Lower leg skin (tissue), 4 donors: ENCODE measurements at regions of chr6 and their contacts with region 1.

Region 1: GRCh38 chr6:134097114-134097707 is 44.8 kb upstream of the SLC2A12 start:
- DNase-seq: peak in 1 of 2 donors; percentile 47
- H3K4me3 ChIP-seq: no peak overlapping the region
- CTCF ChIP-seq: peak in 1 of 3 donors; percentile 53
- POLR2A ChIP-seq: no peak

Region 2: DNA sequence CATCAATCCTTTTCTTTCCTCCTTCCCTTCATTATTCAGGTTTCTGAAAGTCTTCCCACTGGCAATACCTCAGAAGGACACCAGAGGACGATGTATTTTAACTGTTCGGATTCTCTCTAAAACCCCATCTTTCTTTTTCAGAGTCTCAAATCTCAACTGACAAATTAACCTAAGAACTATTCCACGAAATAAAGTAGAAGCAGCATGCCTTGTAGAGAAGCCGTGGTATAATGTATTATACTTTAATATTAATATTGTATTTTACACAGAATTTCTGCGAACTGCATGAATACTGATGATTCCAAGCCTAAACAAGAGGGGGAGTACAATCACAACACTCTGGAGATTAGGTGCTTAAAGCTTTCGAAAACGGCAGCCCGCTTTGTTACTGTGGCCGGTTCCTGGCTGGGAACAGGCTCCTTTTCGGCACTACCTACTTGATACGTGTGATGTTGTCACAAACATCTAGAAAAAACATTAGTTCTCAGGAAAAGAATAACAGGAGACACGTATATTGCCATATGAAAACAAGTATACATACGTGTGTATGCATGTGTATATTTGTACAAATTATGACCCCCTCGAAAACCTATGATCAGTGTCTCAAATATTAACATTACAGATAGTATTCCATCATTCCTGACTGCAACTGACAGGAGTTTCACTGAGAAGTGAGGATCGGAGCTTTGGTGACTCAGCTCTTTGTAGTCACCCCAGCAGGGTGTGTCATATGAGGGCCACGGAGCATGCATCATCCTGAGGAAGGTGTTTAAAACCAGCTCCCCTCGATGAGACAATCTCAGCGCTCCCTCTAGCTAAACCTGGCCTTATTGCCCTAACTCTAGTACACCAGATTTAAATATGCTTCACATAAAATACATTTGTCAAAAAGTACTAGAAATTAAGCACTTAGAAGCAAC is 528.0 kb before region 1 on chr6:
- intact Hi-C with region 1: loop called (anchors 10 kb)
- DNase-seq: peak; percentile 25 to 72
- H3K4me3 ChIP-seq: no peak overlapping the region
- CTCF ChIP-seq: peak in 1 of 3 donors; percentile 87
- POLR2A ChIP-seq: no peak

Region 3: DNA sequence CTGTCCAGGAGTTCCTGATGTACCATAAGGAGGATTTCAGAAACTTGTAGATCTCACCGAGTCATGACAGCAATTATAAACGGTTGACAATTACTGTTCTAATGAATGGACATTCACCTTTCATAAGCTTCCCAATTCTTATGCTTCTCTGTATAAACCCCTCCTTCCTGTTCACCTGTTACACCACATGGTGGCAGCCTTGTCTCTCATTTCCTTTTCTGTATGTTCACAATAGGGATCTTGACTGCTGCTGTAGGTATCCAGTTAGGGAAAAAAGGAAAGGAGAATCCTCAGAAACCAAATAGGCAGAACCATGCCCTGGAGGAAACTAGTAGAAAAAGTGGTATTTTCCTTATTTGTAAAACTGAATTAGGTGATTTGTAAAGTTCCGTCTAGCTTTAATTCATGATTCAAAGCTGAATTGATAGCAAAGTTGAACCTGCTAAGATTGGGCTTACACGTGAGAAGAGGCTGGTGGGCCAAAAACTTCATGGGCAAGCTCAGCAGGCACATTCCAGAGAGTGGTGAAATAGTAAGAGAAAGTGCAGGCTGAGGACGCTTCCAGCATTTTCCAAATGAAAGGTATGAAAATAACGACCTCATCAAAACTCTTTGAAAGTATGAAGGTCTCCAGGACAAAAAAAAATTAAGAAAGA is 173.1 kb before region 1 on chr6:
- intact Hi-C with region 1: loop called (anchors 5 kb)
- DNase-seq: peak in 1 of 2 donors; percentile 69
- H3K4me3 ChIP-seq: no peak overlapping the region
- CTCF ChIP-seq: peak in 1 of 3 donors; percentile 27
- POLR2A ChIP-seq: no peak